Breast epithelium (tissue), 4 donors: ENCODE measurements at regions of chr4 and their contacts with region 1.

Region 1: GRCh38 chr4:92399032-92399431 is 95.3 kb downstream of the GRID2 start:
- DNase-seq: no peak
- H3K4me3 ChIP-seq: no peak overlapping the region
- H3K27ac ChIP-seq: no peak overlapping the region
- H3K4me1 ChIP-seq: no peaks in the 10 kb centered on the region
- H3K27me3 ChIP-seq: no peaks in the 10 kb centered on the region
- CTCF ChIP-seq: no peak
- POLR2A ChIP-seq: no peak

Region 2: DNA sequence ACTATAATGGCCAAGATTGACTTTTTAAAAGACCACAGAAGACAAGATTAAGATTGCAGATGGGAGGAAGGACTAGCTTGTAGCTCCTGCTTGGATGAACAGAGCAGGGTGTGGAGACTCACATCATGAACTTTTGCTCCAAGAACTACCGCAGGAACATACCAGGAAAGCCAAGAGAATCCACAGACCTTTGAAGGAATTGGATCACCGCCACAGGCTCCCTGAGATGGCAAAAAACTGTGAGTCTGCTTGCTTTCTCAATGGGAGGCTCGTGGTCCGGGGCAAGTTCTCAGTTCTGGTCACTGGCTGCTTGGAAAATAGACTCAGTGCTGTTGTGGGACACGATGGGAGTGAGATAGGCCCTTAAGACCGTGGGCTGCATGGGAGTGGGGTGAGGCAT is 1995.3 kb before region 1 on chr4:
- intact Hi-C with region 1: loop called (anchors 5 kb)
- DNase-seq: no peak
- H3K4me3 ChIP-seq: no peak overlapping the region
- H3K27ac ChIP-seq: no peak overlapping the region
- H3K4me1 ChIP-seq: no peaks in the 10 kb centered on the region
- H3K27me3 ChIP-seq: no peaks in the 10 kb centered on the region
- CTCF ChIP-seq: no peak
- POLR2A ChIP-seq: no peak